Cardiac septum (tissue), 1 donor: ENCODE measurements at regions of chr19 and their contacts with region 1.

Region 1: GRCh38 chr19:4139614-4140236 is 13.7 kb upstream of the CREB3L3 start:
- DNase-seq: peak; percentile 93

Region 2: DNA sequence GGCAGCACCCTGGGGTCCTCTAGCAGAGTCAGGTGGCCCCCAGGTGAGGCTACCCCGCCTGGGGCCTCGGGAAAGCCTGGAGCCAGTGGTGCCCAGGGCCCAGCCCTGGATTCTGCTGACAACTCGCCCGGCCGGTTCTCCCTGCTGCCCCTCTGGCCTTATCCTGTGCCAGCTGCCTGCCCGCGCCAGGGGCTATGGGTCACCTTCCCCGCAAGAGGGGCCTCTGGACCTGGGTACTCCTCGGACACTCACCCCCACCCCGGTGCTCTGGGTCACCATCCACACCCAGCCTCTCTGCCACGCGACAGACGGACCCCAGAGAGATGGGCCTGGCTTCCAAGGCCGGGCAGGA is 97.0 kb before region 1 on chr19:
- intact Hi-C with region 1: no loop called
- DNase-seq: no peak

Region 3: GRCh38 chr19:4172861-4173473 is 33.2 kb after region 1 on chr19:
- intact Hi-C with region 1: no loop called
- DNase-seq: no peak

Region 4: DNA sequence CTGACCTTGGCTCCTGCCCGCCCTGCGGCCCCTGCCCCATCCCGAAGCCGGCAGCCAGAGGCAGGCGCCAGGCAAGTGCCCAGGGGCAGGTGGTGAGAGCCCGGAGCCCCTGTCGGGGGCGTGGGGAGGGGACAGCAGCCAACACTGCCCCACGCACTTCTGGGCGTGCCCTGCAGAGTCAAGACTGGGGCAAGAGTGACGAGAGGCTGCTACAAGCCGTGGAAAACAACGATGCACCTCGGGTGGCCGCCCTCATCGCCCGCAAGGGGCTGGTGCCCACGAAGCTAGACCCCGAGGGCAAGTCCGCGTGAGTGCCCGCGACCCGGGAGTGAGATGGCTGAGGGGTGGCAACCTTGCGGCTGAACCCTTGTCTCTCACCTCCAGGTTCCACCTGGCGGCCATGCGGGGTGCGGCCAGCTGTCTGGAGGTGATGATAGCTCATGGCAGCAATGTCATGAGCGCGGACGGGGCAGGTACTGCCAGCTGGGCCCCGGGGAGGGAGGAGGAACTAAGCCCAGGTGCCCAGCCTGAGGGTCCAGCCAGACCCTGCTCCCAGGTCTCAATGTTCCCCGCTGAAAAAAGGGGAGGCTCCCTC is 60.1 kb after region 1 on chr19:
- intact Hi-C with region 1: loop called (anchors 5 kb)
- DNase-seq: no peak